ENCODE measurements at regions of chr2 and their contacts with region 1.

Region 1: GRCh38 chr2:231104115-231104713 is 20.6 kb downstream of the HTR2B start:
- DNase-seq: peak; percentile 76
- ATAC-seq: peak; percentile 93
- H3K4me3 Mint-ChIP-seq: no peak overlapping the region
- H3K27ac Mint-ChIP-seq: no peak overlapping the region
- H3K4me1 Mint-ChIP-seq: peaks cover 14% of the 10 kb centered on the region
- H3K27me3 Mint-ChIP-seq: no peaks in the 10 kb centered on the region

Region 2: GRCh38 chr2:231124838-231125568 is 20.8 kb after region 1 on chr2 and contains the start of gene HTR2B:
- CTCF ChIA-PET with region 1: interaction called, 17 read pairs
- POLR2A ChIA-PET with region 1: interaction called, 3 read pairs
- intact Hi-C with region 1: no loop called
- DNase-seq: peak; percentile 60
- ATAC-seq: peak; percentile 96
- H3K4me3 Mint-ChIP-seq: peak within 1 kb of the TSS; percentile 60
- H3K27ac Mint-ChIP-seq: peak within 1 kb of the TSS; percentile 75
- H3K4me1 Mint-ChIP-seq: peaks cover 35% of the 10 kb centered on the region
- H3K27me3 Mint-ChIP-seq: no peaks in the 10 kb centered on the region
- total RNA-seq, gene HTR2B: 0.11 TPM

Region 3: GRCh38 chr2:231198291-231199173 is 94.3 kb after region 1 on chr2 and contains the start of gene ARMC9:
- CTCF ChIA-PET with region 1: interaction called, 3 read pairs
- POLR2A ChIA-PET with region 1: no interaction called
- intact Hi-C with region 1: loop called in 1 of 2 experiments (anchors 2 kb)
- DNase-seq: peak; percentile 84
- ATAC-seq: peak; percentile 98
- H3K4me3 Mint-ChIP-seq: peak within 1 kb of the TSS; percentile 89
- H3K27ac Mint-ChIP-seq: peak within 1 kb of the TSS; percentile 74
- H3K4me1 Mint-ChIP-seq: peaks cover 7% of the 10 kb centered on the region
- H3K27me3 Mint-ChIP-seq: peaks cover 9% of the 10 kb centered on the region
- total RNA-seq, gene ARMC9: 2.3 to 2.5 TPM

Region 4: GRCh38 chr2:231452799-231453508 is 348.7 kb after region 1 on chr2:
- CTCF ChIA-PET with region 1: interaction called, 16 read pairs
- POLR2A ChIA-PET with region 1: interaction called, 4 read pairs
- intact Hi-C with region 1: loop called in 1 of 2 experiments (anchors 1 kb)
- DNase-seq: peak; percentile 26
- ATAC-seq: peak; percentile 26
- H3K4me3 Mint-ChIP-seq: no peak overlapping the region
- H3K27ac Mint-ChIP-seq: no peak overlapping the region
- H3K4me1 Mint-ChIP-seq: peaks cover 18% of the 10 kb centered on the region
- H3K27me3 Mint-ChIP-seq: no peaks in the 10 kb centered on the region